Activated naive CD4-positive, alpha-beta T cell treated with anti-CD3 and anti-CD28 coated beads for 36 hours (primary cell): ENCODE measurements at regions of chr7 and their contacts with region 1.

Region 1: DNA sequence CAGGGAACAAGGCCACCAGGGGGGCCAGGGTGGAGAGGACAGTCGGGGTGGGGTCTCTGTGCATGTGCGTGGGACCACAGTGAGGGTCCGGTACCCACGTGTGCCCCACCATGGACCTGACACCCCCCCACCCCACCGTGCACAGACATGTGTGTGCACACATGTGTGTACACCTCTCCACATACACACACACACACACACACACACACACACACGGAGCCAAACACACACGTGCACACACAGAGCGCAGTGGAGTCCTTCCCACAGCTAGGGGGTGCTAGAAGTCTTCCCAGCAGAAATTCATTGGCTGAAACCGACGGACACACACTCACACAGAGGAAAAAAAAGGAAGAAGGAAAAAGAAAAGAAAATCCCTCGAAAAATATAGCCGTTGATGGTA is 42.8 kb upstream of the GNA12 start:
- DNase-seq: peak; percentile 78
- H3K4me3 Mint-ChIP-seq: no peak overlapping the region
- H3K27ac Mint-ChIP-seq: no peak overlapping the region
- H3K4me1 Mint-ChIP-seq: peaks cover 3% of the 10 kb centered on the region
- H3K27me3 Mint-ChIP-seq: no peaks in the 10 kb centered on the region

Region 2: DNA sequence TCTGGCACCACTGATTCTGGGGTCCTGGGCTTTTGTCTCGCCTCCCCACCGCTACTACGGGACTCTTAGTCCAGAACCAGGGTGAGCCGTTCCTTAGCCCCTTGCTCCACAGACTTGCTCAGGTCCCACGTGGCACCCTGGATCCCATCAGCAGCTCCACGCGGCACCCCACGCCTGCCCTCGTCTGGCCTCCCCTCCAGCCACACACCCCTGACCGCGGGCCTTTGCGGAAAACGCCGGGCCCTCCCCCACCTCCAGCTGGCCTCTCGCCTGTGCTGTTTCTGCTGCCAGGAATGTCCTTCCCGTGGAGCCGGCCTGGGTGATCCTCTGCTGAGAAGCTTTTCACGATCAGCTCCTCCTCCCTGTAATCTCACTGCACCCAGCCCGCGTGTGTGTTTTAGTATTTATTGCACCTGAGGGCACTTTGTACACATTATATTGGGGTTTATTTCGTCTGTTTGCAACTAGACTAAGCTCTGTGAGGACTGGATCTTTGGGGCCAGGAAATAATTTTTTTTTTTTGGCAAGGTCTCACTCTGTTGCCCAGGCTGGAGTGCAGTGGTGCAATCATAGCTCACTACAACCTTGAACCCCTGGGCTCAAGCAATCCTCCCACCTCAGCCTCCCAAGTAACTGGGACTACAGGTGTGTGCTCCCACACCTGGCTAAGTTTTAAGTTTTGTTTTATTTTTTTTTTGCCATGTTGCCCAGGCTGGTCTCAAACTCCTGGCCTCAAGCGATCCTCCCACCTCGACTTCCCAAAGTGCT is 265.7 kb before region 1 on chr7:
- CTCF ChIA-PET with region 1: no interaction called
- intact Hi-C with region 1: no loop called
- DNase-seq: no peak
- H3K4me3 Mint-ChIP-seq: no peak overlapping the region
- H3K27ac Mint-ChIP-seq: no peak overlapping the region
- H3K4me1 Mint-ChIP-seq: no peaks in the 10 kb centered on the region
- H3K27me3 Mint-ChIP-seq: no peaks in the 10 kb centered on the region

Region 3: GRCh38 chr7:3154912-3155494 is 268.1 kb after region 1 on chr7:
- CTCF ChIA-PET with region 1: interaction called, 11 read pairs
- intact Hi-C with region 1: loop called (anchors 1 kb)
- DNase-seq: peak; percentile 82
- H3K4me3 Mint-ChIP-seq: no peak overlapping the region
- H3K27ac Mint-ChIP-seq: no peak overlapping the region
- H3K4me1 Mint-ChIP-seq: peaks cover 20% of the 10 kb centered on the region
- H3K27me3 Mint-ChIP-seq: no peaks in the 10 kb centered on the region